Caco-2 (cell line): ENCODE measurements at regions of chr5 and their contacts with region 1.

Region 1: DNA sequence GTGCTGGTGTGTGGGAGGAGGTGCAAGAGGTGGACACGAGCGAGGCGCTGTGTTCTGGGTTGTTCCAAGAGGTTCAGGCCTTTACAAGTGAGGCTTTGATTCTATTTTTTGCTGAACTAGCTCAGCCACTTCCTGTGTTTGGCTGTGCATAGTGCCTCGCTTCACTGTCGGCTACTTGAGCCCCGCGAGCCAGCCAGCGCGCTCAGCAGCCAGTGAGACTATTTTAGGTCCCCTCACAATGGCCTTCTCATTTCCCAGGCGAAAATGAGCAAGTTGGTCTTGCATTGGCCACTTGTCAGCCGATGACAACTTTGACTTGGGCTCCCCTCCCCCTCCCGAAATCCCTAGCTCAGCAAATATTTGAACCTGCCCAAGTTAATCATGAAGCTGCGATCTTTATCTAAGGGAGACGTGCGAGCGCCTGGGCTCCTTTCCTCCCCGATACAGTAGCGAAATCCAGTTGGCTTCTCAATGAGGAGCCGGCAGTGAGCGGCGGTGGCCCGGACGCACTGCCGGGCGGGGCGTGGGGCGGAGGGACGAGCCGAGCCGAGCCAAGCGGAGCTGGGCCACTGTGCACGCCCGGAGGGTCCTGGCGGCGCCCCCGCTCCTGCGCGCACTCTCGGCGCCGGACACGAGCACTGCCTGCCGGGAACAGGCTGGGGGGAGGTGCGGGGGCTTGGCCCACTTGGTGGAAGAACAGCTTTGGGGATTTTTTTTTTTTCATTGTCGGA is 72.6 kb downstream of the PIK3R1 start:
- DNase-seq: peak; percentile 75 to 76
- H3K4me3 ChIP-seq: peak overlapping the region; percentile 42
- H3K4me3 Mint-ChIP-seq: peak overlapping the region; percentile 88
- H3K27ac Mint-ChIP-seq: peak overlapping the region; percentile 83
- H3K4me1 ChIP-seq: peaks cover 29% of the 10 kb centered on the region
- H3K4me1 Mint-ChIP-seq: peaks cover 40% of the 10 kb centered on the region
- H3K27me3 ChIP-seq: no peaks in the 10 kb centered on the region
- H3K27me3 Mint-ChIP-seq: no peaks in the 10 kb centered on the region
- CTCF ChIP-seq: no peak

Region 2: DNA sequence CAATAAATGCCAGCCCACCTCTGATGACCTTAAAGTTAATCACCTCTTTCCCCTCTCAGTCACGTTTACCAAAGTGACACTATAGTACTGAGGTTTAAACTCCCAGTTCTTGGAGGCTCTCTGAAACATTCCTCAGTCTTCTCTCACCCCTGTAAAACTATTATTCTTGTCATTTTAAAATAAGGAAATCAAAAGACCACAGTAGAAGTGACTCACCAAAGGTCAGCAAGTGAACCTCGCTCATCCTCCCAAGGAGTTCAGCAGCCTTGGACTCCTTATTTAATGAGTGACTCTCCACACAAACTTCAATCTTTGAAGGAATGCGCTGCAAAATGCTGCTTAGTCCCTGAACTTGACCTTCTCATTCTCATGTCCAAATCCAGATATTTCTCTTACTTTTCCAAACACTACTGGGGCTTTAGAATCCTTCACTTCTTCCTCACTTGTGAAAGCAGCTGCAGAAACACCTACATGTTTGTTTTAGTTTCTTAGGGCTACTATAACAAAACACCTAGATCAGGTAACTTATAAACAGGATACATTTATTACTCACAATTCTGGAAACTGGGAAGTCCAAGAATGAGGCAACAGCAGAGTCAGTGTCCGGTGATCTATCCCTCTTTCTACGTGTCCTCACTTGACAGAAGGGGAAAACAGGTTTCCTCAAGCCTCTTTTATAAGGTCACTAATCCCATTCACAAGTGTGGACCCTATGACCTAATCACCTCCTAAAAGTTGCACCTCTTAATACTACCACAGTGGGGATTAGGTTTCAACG is 31.4 kb after region 1 on chr5:
- CTCF ChIA-PET with region 1: interaction called, 3 read pairs
- POLR2A ChIA-PET with region 1: no interaction called
- intact Hi-C with region 1: loop called (anchors 5 kb)
- DNase-seq: no peak
- H3K4me3 ChIP-seq: no peak overlapping the region
- H3K4me3 Mint-ChIP-seq: no peak overlapping the region
- H3K27ac Mint-ChIP-seq: peak overlapping the region; percentile 2
- H3K4me1 ChIP-seq: peaks cover 39% of the 10 kb centered on the region
- H3K4me1 Mint-ChIP-seq: peaks cover 35% of the 10 kb centered on the region
- H3K27me3 ChIP-seq: no peaks in the 10 kb centered on the region
- H3K27me3 Mint-ChIP-seq: no peaks in the 10 kb centered on the region
- CTCF ChIP-seq: no peak

Region 3: GRCh38 chr5:68433923-68434879 is 146.1 kb after region 1 on chr5:
- CTCF ChIA-PET with region 1: no interaction called
- POLR2A ChIA-PET with region 1: no interaction called
- intact Hi-C with region 1: loop called (anchors 10 kb)
- DNase-seq: peak; percentile 72 to 89
- H3K4me3 ChIP-seq: no peak overlapping the region
- H3K4me3 Mint-ChIP-seq: peak overlapping the region; percentile 49
- H3K27ac Mint-ChIP-seq: peak overlapping the region; percentile 80
- H3K4me1 ChIP-seq: peaks cover 13% of the 10 kb centered on the region
- H3K4me1 Mint-ChIP-seq: peaks cover 11% of the 10 kb centered on the region
- H3K27me3 ChIP-seq: no peaks in the 10 kb centered on the region
- H3K27me3 Mint-ChIP-seq: no peaks in the 10 kb centered on the region
- CTCF ChIP-seq: no peak

Region 4: GRCh38 chr5:68505917-68506860 is 218.0 kb after region 1 on chr5:
- CTCF ChIA-PET with region 1: interaction called, 8 read pairs
- POLR2A ChIA-PET with region 1: no interaction called
- intact Hi-C with region 1: loop called (anchors 5 kb)
- DNase-seq: peak; percentile 73 to 77
- H3K4me3 ChIP-seq: no peak overlapping the region
- H3K4me3 Mint-ChIP-seq: peak overlapping the region; percentile 43
- H3K27ac Mint-ChIP-seq: peak overlapping the region; percentile 48
- H3K4me1 ChIP-seq: peaks cover 33% of the 10 kb centered on the region
- H3K4me1 Mint-ChIP-seq: peaks cover 18% of the 10 kb centered on the region
- H3K27me3 ChIP-seq: no peaks in the 10 kb centered on the region
- H3K27me3 Mint-ChIP-seq: no peaks in the 10 kb centered on the region
- CTCF ChIP-seq: no peak

Region 5: GRCh38 chr5:68745448-68745847 is 457.3 kb after region 1 on chr5:
- CTCF ChIA-PET with region 1: no interaction called
- POLR2A ChIA-PET with region 1: no interaction called
- intact Hi-C with region 1: loop called (anchors 10 kb)
- DNase-seq: no peak
- H3K4me3 ChIP-seq: no peak overlapping the region
- H3K4me3 Mint-ChIP-seq: no peak overlapping the region
- H3K27ac Mint-ChIP-seq: no peak overlapping the region
- H3K4me1 ChIP-seq: 0 out of 2 replicates have a peak, but pooled peaks cover 3% of the 10 kb centered on the region
- H3K4me1 Mint-ChIP-seq: no peaks in the 10 kb centered on the region
- H3K27me3 ChIP-seq: no peaks in the 10 kb centered on the region
- H3K27me3 Mint-ChIP-seq: no peaks in the 10 kb centered on the region
- CTCF ChIP-seq: no peak